ENCODE measurements at regions of chr2 and their contacts with region 1.

Region 1: DNA sequence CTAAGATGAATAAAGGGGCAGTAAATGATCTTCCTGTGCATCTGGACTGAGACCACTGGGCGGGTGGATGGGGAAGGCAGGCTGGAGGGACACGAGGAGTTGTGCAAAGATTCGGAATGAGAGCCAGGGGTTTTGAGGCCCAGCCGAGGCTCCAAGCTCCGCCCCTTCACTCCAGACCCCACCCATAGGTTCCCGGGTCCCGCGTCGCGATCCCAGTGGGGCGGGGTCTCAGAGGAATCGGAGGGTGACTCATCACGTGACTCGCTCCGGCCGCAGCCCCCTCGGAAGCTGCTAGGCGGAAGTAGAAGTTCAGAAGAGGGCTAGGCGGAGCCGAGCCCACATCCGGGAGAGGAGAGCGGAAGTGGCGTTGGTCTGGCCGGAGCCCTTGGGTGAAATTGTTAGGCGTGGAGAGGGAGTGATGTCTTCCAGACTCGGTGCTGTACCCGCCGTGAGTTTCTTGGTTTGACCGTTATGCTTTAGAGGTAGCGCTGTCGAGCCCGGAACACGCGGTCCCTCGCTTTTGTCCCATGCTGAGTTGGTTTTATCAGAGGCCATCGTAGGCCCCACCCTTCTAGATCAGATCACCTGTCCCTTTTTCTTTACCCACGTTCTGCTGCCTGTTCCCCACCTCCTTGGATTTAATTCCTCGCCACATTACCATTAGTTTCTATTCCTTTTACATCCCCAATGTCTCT is at the start of gene ZNF512:
- DNase-seq: peak; percentile 89
- H3K4me3 Mint-ChIP-seq: peak within 1 kb of the TSS; percentile 96
- H3K27ac Mint-ChIP-seq: peak within 1 kb of the TSS; percentile 95
- H3K4me1 Mint-ChIP-seq: peaks cover 30% of the 10 kb centered on the region
- H3K27me3 Mint-ChIP-seq: peaks cover 13% of the 10 kb centered on the region
- CTCF ChIP-seq: no peak
- total RNA-seq, gene ZNF512: 24.4 and 28.6 TPM in 2 replicates

Region 2: DNA sequence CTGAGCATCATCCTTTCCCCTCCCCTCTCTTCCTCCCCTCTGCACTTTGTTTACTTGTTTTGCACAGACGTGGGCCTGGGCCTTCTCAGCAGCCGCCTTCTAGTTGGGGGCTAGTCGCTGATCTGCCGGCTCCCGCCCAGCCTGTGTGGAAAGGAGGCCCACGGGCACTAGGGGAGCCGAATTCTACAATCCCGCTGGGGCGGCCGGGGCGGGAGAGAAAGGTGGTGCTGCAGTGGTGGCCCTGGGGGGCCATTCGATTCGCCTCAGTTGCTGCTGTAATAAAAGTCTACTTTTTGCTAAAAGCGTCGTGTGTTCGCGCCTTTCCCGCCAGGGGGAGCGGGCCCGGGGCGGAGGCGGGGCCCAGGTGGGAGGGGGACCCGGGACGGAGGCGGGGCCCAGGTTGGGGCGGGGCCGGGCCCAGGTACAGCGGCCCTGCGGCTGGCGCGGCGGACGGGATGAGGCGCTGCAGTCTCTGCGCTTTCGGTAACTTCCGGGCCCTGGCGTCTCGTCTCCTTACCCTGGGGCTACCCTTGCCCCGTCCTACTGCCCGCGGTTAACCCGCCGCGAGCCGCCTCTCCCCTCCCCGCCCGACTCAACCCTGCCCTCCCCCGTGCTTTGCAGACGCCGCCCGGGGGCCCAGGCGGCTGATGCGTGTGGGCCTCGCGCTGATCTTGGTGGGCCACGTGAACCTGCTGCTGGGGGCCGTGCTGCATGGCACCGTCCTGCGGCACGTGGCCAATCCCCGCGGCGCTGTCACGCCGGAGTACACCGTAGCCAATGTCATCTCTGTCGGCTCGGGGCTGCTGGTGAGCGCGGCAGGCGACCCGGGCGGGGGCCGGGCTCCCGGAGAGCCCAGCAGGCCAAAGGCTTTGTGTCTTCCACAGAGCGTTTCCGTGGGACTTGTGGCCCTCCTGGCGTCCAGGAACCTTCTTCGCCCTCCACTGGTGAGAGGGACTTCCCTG is 140.6 kb before region 1 on chr2 and contains the start of gene KRTCAP3:
- CTCF ChIA-PET with region 1: no interaction called
- intact Hi-C with region 1: loop called (anchors 10 kb)
- DNase-seq: peak; percentile 94
- H3K4me3 Mint-ChIP-seq: peak within 1 kb of the TSS; percentile 79
- H3K27ac Mint-ChIP-seq: peak within 1 kb of the TSS; percentile 85
- H3K4me1 Mint-ChIP-seq: peaks cover 26% of the 10 kb centered on the region
- H3K27me3 Mint-ChIP-seq: no peaks in the 10 kb centered on the region
- CTCF ChIP-seq: peak; percentile 86
- total RNA-seq, gene KRTCAP3: 71.8 and 74.0 TPM in 2 replicates

Region 3: DNA sequence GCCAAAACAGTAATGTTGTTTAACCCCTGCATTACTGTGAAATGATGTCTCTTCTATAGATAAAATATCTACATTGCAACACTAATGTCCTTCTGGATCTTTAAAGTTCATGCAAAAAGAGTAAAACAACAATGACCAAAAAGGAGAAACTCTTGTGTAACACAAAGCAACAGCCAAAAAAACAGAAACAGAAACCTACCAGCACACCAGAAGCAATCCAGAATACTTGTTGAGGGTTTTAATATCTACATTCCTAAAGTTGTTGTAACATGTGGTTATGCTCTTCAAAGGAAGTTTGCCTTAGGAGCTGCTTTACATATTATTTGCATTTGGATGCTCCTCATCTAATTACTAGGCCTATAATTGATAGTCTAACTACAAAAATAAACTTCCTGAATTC is 464.8 kb after region 1 on chr2:
- CTCF ChIA-PET with region 1: no interaction called
- intact Hi-C with region 1: no loop called
- DNase-seq: no peak
- H3K4me3 Mint-ChIP-seq: no peak overlapping the region
- H3K27ac Mint-ChIP-seq: no peak overlapping the region
- H3K4me1 Mint-ChIP-seq: peaks cover 26% of the 10 kb centered on the region
- H3K27me3 Mint-ChIP-seq: no peaks in the 10 kb centered on the region
- CTCF ChIP-seq: no peak